ENCODE measurements at regions of chr22 and their contacts with region 1.

Region 1: GRCh38 chr22:43993027-43993760 is 30.9 kb upstream of the PARVB start:
- DNase-seq: peak; percentile 85
- CTCF ChIP-seq: peak; percentile 94

Region 2: GRCh38 chr22:43891546-43892518 is 101.4 kb before region 1 on chr22 and contains the start of gene PNPLA5:
- CTCF ChIA-PET with region 1: no interaction called
- POLR2A ChIA-PET with region 1: no interaction called
- DNase-seq: no peak
- CTCF ChIP-seq: no peak

Region 3: GRCh38 chr22:43976861-43977795 is 16.1 kb before region 1 on chr22:
- CTCF ChIA-PET with region 1: interaction called, 36 read pairs
- POLR2A ChIA-PET with region 1: no interaction called
- DNase-seq: no peak
- CTCF ChIP-seq: no peak

Region 4: DNA sequence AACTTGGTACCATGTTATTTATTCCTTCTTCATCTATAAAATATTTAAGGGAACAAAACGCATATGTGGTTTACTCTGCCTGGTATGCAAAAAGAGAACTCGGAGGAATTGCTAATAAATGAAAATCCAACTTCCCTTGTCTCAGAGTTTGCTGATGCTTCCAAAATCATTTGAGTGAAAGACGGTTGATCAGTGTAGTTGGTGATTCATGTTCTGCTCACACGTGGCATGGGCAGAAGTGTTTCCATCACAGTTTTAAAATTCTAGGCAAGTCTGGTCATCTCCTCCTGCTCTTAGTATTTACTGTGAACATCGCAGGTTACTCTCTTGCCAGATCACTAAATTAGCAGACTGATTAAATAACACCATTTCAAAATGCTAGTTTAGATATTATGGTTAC is 19.0 kb after region 1 on chr22:
- CTCF ChIA-PET with region 1: interaction called, 34 read pairs
- POLR2A ChIA-PET with region 1: no interaction called
- DNase-seq: no peak
- CTCF ChIP-seq: no peak

Region 5: DNA sequence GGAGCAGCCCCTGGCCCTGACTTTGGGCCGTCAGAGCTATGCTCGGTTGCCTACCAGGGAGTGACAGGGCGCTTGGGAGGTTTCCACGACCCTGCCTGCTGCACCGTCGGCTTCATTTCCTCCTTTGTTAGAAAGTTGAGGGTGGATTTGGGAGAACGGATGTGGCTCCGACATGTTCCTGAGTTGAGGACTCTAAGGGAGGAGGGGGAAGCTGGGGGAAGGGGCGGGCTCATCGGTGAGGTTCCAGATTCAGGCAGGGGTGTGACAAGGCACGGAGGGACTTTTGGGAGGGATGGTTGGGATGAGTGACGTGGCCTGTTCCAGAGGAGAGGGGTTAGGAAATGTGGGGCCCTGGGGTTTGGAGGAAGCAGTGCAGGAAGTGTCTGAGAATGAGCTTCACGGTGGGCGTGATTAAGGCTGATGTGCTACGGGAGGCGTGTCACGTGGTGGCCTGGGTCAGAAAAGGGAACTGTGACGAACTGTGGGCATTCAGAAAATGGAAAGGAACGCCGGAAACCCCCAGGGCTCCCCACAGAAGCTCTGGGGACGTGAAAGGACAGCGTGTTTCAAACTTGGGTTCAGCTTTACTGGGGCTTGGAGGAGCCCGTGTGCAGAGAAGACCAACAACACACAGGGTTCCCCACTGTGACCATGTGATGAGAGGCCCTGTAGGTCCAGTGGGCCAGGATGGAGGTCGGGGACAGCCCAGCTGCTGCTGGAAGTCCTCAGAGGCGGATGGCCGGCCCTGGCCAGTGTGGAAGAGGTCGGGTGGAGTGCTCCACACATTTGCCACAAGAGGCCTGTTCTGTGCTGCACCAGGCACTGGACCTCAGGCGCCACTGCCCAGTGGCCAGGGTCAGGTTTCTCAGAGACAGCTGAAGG is 33.7 kb after region 1 on chr22:
- CTCF ChIA-PET with region 1: interaction called, 18 read pairs
- POLR2A ChIA-PET with region 1: interaction called, 4 read pairs
- DNase-seq: peak; percentile 88
- CTCF ChIP-seq: no peak

Region 6: GRCh38 chr22:44068422-44069191 is 75.4 kb after region 1 on chr22:
- CTCF ChIA-PET with region 1: interaction called, 44 read pairs
- POLR2A ChIA-PET with region 1: no interaction called
- DNase-seq: peak; percentile 79
- CTCF ChIP-seq: peak; percentile 17

Region 7: GRCh38 chr22:44567846-44568493 is 574.8 kb after region 1 on chr22:
- CTCF ChIA-PET with region 1: interaction called, 12 read pairs
- POLR2A ChIA-PET with region 1: no interaction called
- DNase-seq: no peak
- CTCF ChIP-seq: peak; percentile 63

Region 8: DNA sequence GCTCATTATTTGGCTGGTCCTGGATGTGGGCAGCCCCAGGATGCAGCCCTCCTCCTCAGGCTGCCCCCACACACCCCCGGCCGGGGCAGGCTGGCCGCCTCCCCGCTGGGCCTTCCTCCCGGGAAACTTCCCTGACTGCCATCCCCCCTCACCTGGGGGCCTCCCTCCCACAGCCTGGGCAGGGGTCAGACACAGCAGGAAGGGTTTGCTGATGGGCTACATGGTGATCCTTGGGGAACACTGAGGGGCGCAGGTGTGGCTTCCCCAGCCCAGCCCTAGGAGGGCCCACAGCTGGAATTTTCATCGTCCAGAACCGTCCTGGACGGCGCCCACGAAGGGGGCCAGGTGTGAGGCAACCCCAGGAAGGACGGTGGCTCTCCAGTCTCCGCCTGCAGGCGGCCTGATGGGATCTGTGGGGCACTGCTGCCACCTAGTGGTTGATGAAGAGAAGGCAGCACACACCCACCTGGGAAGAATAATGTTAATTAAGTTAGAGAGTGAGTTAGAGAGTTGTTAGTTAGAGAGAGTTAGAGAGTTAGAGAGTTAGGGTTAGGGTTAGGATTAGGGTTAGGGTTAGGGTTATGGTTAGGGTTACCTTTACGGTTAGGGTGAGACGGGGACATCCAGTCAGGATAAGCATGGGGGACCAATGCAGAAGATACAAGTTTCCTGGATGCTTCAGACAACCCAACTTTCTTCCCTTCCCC is 632.9 kb after region 1 on chr22:
- CTCF ChIA-PET with region 1: interaction called, 53 read pairs
- POLR2A ChIA-PET with region 1: no interaction called
- DNase-seq: peak; percentile 88
- CTCF ChIP-seq: peak; percentile 94

Measured in GM10248 (cell line).